Activated CD8-positive, alpha-beta T cell treated with anti-CD3 and anti-CD28 coated beads, Interleukin-2, amount 10 ng/mL, durations not matched to agents 7 days and 5 days (primary cell): ENCODE measurements at regions of chr6 and their contacts with region 1.

Region 1: DNA sequence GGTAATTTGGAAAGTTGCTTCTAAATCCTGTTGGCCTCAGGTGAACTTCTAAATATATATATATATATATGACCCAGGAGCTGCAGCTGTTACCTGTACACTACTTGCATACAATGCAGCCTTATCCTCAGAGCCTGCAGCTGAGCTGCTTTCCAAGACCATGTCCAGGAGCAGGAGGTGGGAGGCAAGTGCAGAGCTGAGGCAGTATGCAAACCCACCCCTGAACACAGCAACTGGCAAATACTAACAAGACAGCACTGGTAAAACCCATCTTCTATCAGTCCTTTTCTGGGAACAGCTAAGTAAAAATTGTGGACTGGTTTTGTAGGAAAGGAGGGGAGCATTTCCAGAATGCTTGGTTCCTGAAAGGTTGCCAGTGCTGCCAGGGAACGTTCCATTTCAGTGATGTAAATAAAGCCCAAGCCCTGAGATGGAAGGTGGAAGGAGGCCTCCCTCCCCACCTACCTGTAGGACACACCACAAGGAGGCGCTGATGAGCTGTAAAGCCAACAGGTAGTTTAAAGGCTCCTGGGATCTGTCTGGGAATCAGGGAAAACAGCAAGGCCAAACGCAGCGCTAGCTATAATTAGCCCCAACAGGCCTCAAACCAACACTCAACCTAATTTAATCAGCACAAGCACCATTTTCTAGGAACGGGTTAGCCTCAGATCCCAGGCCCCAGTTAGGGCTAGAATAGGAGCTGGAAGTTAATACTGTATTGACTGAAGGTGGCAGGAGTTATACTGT is 93.8 kb upstream of the MAP7 start:
- DNase-seq: peak; percentile 86
- ATAC-seq: peak; percentile 74
- H3K4me3 Mint-ChIP-seq: no peak overlapping the region
- H3K27ac Mint-ChIP-seq: no peak overlapping the region
- H3K4me1 Mint-ChIP-seq: no peaks in the 10 kb centered on the region
- H3K27me3 Mint-ChIP-seq: no peaks in the 10 kb centered on the region

Region 2: GRCh38 chr6:136628996-136629395 is 15.0 kb before region 1 on chr6:
- CTCF ChIA-PET with region 1: interaction called, 15 read pairs
- POLR2A ChIA-PET with region 1: no interaction called
- DNase-seq: no peak
- ATAC-seq: no peak
- H3K4me3 Mint-ChIP-seq: no peak overlapping the region
- H3K27ac Mint-ChIP-seq: no peak overlapping the region
- H3K4me1 Mint-ChIP-seq: peaks cover 7% of the 10 kb centered on the region
- H3K27me3 Mint-ChIP-seq: no peaks in the 10 kb centered on the region

Region 3: DNA sequence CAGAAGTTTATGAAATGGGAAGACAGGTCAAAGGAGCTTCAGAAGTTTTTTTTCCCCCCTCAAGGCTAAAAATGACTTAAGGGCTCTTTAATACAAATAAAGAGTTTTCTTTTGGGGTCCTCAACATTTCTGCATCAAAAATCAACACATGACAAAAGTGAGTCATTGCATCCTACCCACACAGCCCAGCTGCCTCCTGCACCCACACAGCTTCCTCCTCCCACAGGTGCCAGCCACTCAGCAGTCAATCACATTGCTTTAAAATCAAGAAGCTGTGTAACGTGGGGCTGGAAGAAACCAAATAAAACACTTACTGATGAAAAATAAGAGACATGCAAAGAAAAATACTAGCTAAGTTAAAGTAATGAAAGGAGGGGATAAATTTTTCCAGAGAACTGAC is 79.8 kb after region 1 on chr6:
- CTCF ChIA-PET with region 1: interaction called, 11 read pairs
- POLR2A ChIA-PET with region 1: no interaction called
- DNase-seq: peak; percentile 58
- ATAC-seq: peak; percentile 81
- H3K4me3 Mint-ChIP-seq: no peak overlapping the region
- H3K27ac Mint-ChIP-seq: no peak overlapping the region
- H3K4me1 Mint-ChIP-seq: peaks cover 33% of the 10 kb centered on the region
- H3K27me3 Mint-ChIP-seq: no peaks in the 10 kb centered on the region

Region 4: GRCh38 chr6:136751522-136751956 is 107.5 kb after region 1 on chr6:
- CTCF ChIA-PET with region 1: interaction called, 18 read pairs
- POLR2A ChIA-PET with region 1: no interaction called
- DNase-seq: peak; percentile 72
- ATAC-seq: peak; percentile 71
- H3K4me3 Mint-ChIP-seq: peak overlapping the region; percentile 56
- H3K27ac Mint-ChIP-seq: peak overlapping the region; percentile 89
- H3K4me1 Mint-ChIP-seq: peaks cover 76% of the 10 kb centered on the region
- H3K27me3 Mint-ChIP-seq: peaks cover 7% of the 10 kb centered on the region

Region 5: DNA sequence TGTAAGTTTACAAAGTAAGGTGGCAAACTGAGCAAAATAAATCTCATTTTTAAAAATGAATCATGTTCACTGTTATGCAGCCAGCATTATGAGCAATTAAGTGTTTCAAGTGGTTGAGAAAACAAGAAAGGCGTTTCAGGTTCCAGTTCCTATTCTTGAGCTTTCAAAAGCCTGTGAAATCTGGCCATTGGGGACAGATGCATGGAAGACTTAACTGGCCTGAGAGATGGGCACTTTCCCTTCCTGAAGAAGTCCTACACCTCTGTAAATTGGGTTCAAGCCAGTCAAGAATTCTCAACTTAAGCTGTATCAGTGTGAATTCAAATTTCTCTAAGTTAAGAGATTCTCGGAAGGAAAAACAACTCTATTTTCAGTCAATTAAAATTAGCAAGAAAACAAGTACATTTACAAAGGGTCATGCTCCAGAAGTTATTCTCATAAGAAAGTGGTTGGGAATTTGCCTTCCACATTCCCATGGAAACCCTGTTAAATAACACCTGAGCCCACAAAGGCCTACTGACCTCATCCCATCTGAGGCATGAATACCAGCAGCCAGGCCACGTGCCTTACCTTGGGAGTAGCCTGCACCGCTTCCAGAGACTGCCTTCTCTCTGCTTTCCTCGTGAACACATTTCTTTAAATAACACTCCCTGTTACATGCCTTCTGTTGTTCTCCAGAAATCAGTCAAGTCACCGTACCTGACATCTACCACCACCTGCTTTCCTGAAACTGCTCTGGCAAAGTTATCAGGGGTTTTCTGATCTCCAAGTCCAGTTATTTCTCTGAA is 128.9 kb after region 1 on chr6:
- CTCF ChIA-PET with region 1: interaction called, 12 read pairs
- POLR2A ChIA-PET with region 1: no interaction called
- DNase-seq: no peak
- ATAC-seq: no peak
- H3K4me3 Mint-ChIP-seq: no peak overlapping the region
- H3K27ac Mint-ChIP-seq: peak overlapping the region; percentile 9
- H3K4me1 Mint-ChIP-seq: peaks cover 14% of the 10 kb centered on the region
- H3K27me3 Mint-ChIP-seq: no peaks in the 10 kb centered on the region